Activated T-helper 1 cell treated with anti-CD3 and anti-CD28 coated beads, Interleukin-12 subunit alpha, Interleukin-12 subunit beta, Interleukin-2, Interleukin-4 antibody, amounts not matched to agents 30 ng/mL and 10 ng/mL and 1 ng/mL, durations not matched to agents 14 hours and 24 hours and 36 hours (primary cell): ENCODE measurements at regions of chr21 and their contacts with region 1.

Region 1: GRCh38 chr21:17708522-17709265 is 96.0 kb upstream of the BTG3 start:
- DNase-seq: no peak
- H3K4me3 Mint-ChIP-seq: no peak overlapping the region
- H3K27ac Mint-ChIP-seq: peak overlapping the region; percentile 42
- H3K4me1 Mint-ChIP-seq: peaks cover 31% of the 10 kb centered on the region
- H3K27me3 Mint-ChIP-seq: peaks cover 10% of the 10 kb centered on the region

Region 2: DNA sequence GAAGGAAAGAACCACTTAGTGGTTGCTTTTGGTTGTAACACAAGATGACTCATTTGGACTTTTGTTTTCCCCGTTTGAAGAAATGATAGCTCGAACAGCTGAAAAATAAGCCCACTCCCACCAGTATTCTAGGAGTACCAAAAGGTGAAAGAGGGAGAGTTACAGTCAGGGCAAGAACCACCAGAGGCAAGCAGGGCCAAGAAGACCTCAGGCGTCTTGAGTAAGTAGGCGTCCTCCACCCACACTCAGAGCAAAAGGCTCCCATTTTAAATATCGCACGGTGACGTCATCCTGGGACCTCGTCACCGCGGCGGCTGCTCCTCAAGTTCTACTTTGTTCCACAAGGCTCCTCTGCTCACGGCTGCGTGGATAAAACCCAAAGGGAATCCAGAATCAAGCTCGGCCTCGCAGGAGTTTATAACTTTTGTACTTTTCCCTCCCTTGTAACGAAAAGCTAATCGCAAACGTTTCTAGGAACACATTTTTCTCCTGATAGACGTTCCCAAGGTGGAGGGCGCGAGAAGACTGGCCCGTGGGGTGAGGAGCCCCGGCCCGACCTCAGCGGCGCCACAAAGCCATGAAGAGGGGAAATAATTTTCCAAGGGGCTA is 97.2 kb before region 1 on chr21:
- intact Hi-C with region 1: loop called (anchors 1 kb)
- DNase-seq: peak; percentile 76
- H3K4me3 Mint-ChIP-seq: peak overlapping the region; percentile 88
- H3K27ac Mint-ChIP-seq: peak overlapping the region; percentile 97
- H3K4me1 Mint-ChIP-seq: peaks cover 58% of the 10 kb centered on the region
- H3K27me3 Mint-ChIP-seq: no peaks in the 10 kb centered on the region

Region 3: GRCh38 chr21:17688912-17689874 is 19.5 kb before region 1 on chr21:
- intact Hi-C with region 1: loop called (anchors 2 kb)
- DNase-seq: peak; percentile 13
- H3K4me3 Mint-ChIP-seq: no peak overlapping the region
- H3K27ac Mint-ChIP-seq: no peak overlapping the region
- H3K4me1 Mint-ChIP-seq: peaks cover 36% of the 10 kb centered on the region
- H3K27me3 Mint-ChIP-seq: peaks cover 3% of the 10 kb centered on the region